Activated B cell treated with CpG ODN at 0.5 μM for 24 hours (primary cell): ENCODE measurements at regions of chr1 and their contacts with region 1.

Region 1: DNA sequence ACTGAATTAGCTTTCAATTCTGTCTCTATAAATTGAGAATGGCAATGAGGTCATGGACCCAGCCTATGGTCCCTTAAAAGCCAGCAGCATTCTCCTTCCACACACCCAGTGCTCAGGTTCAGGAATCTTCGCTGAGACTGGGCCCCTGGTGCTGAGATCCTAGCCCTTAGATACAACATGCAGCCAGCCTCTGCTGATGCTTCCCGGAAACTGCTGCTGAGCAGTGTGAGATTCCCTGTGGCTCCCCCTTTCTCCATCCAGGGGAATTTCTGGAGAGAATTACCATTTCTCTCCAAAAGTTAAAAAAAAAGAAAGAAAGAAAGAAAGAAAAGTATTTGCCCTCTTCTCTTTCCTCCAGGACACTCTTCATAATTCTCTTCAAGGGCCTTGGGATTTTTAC is 31.7 kb upstream of the RALGPS2 start:
- DNase-seq: no peak
- ATAC-seq: no peak
- H3K4me3 Mint-ChIP-seq: no peak overlapping the region
- H3K27ac Mint-ChIP-seq: no peak overlapping the region
- H3K4me1 Mint-ChIP-seq: peaks cover 19% of the 10 kb centered on the region
- H3K27me3 Mint-ChIP-seq: no peaks in the 10 kb centered on the region
- CTCF ChIP-seq: no peak

Region 2: GRCh38 chr1:178518894-178519293 is 174.5 kb before region 1 on chr1:
- CTCF ChIA-PET with region 1: no interaction called
- POLR2A ChIA-PET with region 1: no interaction called
- intact Hi-C with region 1: no loop called
- DNase-seq: no peak
- ATAC-seq: no peak
- H3K4me3 Mint-ChIP-seq: no peak overlapping the region
- H3K27ac Mint-ChIP-seq: no peak overlapping the region
- H3K4me1 Mint-ChIP-seq: no peaks in the 10 kb centered on the region
- H3K27me3 Mint-ChIP-seq: peaks cover 2% of the 10 kb centered on the region
- CTCF ChIP-seq: no peak

Region 3: DNA sequence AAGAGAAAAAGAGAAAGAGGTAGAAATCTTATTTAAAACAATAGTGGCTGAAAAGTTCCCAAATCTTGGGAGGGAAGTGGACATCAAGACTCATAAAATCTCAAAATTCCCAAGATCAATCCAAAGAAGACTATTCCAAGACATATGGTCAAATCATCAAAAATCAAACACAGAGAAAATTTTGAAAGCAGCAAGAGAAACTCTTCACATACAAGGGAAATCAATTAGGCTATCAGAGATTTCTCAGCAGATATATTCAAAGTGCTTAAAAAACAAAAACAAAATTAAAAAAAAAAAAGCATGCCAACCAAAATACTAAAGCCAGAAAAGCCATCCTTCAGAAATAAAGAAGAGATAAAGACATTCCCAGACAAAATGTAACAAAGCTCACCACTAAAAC is 20.9 kb before region 1 on chr1:
- CTCF ChIA-PET with region 1: no interaction called
- POLR2A ChIA-PET with region 1: no interaction called
- intact Hi-C with region 1: loop called (anchors 2 kb)
- DNase-seq: no peak
- ATAC-seq: no peak
- H3K4me3 Mint-ChIP-seq: no peak overlapping the region
- H3K27ac Mint-ChIP-seq: no peak overlapping the region
- H3K4me1 Mint-ChIP-seq: peaks cover 37% of the 10 kb centered on the region
- H3K27me3 Mint-ChIP-seq: no peaks in the 10 kb centered on the region
- CTCF ChIP-seq: no peak

Region 4: GRCh38 chr1:178802873-178803272 is 109.5 kb after region 1 on chr1:
- CTCF ChIA-PET with region 1: no interaction called
- POLR2A ChIA-PET with region 1: no interaction called
- intact Hi-C with region 1: no loop called
- DNase-seq: no peak
- ATAC-seq: no peak
- H3K4me3 Mint-ChIP-seq: no peak overlapping the region
- H3K27ac Mint-ChIP-seq: peak overlapping the region; percentile 46
- H3K4me1 Mint-ChIP-seq: peaks cover 45% of the 10 kb centered on the region
- H3K27me3 Mint-ChIP-seq: no peaks in the 10 kb centered on the region
- CTCF ChIP-seq: no peak